Heart right ventricle (tissue), 16 donors: ENCODE measurements at regions of chr4 and their contacts with region 1.

Region 1: DNA sequence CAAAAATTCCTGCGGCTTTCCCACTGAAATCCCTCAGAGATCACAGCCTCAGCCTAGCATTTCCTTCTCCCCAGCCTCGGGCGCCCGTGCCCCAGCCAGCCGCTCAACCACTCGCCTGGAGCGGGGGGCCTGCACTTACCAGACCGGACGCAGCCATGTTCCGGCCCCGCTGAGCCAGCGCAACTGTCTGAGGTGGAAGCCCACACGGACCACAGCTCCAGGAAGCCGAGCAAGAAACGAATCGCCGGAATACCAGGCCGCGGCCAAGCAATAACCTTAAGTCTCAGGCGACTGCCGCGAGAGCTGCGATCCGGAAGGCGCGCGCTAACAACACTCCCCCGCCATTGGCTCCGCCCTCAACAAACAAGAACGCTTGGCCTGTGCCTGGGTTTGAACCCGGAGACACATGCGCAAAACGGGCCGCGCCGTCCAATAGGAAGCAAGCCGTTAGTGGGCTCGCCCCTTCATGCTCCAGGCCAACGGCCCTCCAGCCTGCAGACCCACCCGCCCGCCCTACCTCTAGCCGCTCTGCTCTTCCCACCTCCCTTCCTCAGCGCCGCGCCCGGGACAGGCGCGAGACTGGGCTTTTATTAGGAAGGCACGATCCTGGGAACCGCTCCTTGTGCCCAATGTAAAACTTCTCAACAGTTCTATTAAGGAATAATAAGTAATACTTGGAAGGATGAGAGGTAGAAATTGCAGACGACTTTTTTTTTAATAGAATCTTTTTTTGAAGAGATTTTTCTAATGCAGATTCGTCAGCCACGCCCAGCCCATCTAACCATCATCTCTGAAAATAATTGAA is at the start of gene CENPC:
- DNase-seq: peak; percentile 96 to 97
- ATAC-seq: peak; percentile 99 to 100 (median 100)
- H3K4me3 ChIP-seq: peak within 1 kb of the TSS; percentile 48 to 92 (median 79)
- H3K27ac ChIP-seq: peak within 1 kb of the TSS; percentile 28 to 98 (median 90)
- H3K4me1 ChIP-seq: peaks cover 0 to 39% (median 25%) of the 10 kb centered on the region in 9 donors
- H3K27me3 ChIP-seq: no peaks in the 10 kb centered on the region
- CTCF ChIP-seq: no peak
- total RNA-seq, gene CENPC: 7.0 to 12.9 (median 11.5) TPM

Region 2: DNA sequence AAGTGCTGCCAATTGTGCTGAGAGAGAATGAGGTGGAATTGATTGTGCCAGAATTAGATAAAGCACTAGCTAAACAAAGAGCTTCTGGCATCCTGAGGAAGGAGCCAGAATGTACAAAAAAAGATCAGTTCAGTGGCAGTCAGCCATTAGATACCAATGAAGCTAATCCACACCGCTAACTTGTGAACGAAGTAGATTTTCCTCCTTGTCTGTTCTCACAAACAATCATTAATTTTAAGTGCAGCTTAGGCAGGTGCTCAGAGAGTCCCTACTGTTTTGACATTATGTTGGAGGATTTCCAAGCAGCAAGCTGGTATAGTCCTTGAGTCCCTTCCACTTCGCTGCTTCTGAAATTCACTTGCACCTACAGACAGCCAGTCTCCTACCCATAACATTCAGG is 617.5 kb before region 1 on chr4:
- intact Hi-C with region 1: no loop called
- DNase-seq: no peak
- ATAC-seq: peak in 3 of 8 donors; percentile 25 to 77 (median 73)
- H3K4me3 ChIP-seq: no peak overlapping the region
- H3K27ac ChIP-seq: no peak overlapping the region
- H3K4me1 ChIP-seq: peaks cover 0 to 4% (median 0%) of the 10 kb centered on the region in 9 donors
- H3K27me3 ChIP-seq: no peaks in the 10 kb centered on the region
- CTCF ChIP-seq: no peak

Region 3: DNA sequence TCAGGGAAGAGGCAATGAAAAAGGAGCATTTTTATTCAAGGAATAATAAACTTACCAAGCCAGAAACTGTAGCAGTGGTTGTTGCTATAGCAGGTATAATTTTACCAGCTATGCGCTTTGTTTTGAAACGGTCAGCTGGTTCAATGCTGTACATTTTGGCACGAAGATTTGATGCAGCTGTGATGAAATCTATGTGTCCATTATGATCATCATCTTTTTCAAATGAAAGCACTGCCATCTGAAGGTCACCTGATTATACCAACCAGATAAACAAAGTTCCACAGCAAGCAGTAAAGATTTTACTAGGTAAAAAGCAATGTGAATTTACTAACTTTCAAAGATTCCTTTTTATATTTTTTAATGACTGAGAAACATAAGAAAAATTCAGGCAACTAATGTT is 79.5 kb after region 1 on chr4:
- intact Hi-C with region 1: loop called in 1 of 10 experiments (anchors 10 kb)
- DNase-seq: no peak
- ATAC-seq: no peak
- H3K4me3 ChIP-seq: no peak overlapping the region
- H3K27ac ChIP-seq: no peak overlapping the region
- H3K4me1 ChIP-seq: no peaks in the 10 kb centered on the region
- H3K27me3 ChIP-seq: no peaks in the 10 kb centered on the region
- CTCF ChIP-seq: no peak

Region 4: DNA sequence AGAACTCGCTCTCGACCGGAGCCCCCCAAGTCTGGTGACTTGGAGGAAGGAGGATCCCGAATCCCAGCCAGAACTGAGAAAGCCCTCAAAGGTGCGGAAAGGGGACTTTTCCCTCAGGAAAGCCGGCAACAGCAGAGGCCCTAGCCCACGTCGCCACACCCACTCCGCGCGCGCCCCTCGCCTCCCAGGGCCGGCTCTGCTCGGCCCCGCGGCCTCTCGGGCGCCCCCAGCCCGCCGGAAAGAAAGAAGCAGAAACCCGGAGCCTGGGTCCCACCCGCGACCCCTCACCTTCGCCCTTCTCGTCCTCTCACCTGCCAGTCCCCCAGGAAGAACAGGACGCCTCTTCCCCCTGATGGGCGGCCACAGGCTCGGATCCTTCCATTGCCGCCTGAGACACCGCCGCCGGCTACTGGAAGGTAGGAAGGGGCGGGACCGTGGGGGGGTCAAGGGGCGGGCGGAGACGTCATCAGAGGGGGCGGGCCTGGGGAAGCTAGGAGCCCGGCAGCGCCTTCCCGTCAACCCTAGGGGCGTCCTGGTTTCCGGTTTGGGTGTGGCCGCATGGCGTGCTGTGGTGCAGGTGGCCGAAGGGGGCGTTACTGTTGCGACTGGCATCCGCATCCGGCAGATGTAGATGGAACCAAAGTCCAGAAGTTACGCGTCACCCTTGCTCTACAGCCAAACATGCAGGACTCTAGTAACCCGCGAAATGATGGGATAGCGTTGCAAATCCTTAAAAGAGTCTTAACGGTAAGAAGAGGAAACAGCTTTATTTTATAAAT is 155.5 kb after region 1 on chr4 and contains the start of gene UBA6:
- intact Hi-C with region 1: loop called in 4 of 10 experiments (anchors 2 to 5 kb)
- DNase-seq: peak; percentile 95 to 96
- ATAC-seq: peak; percentile 100
- H3K4me3 ChIP-seq: peak within 1 kb of the TSS; percentile 63 to 94 (median 82)
- H3K27ac ChIP-seq: peak within 1 kb of the TSS; percentile 52 to 93 (median 84)
- H3K4me1 ChIP-seq: peaks cover 0 to 24% (median 20%) of the 10 kb centered on the region in 9 donors
- H3K27me3 ChIP-seq: no peaks in the 10 kb centered on the region
- CTCF ChIP-seq: peak; percentile 23 to 69 (median 55)
- total RNA-seq, gene UBA6: 12.9 to 35.7 (median 19.5) TPM

Region 5: GRCh38 chr4:68349649-68350360 is 804.4 kb after region 1 on chr4 and contains the start of gene YTHDC1:
- intact Hi-C with region 1: loop called in 1 of 10 experiments (anchors 10 kb)
- DNase-seq: peak; percentile 96 to 98
- ATAC-seq: peak; percentile 99 to 100 (median 99)
- H3K4me3 ChIP-seq: peak within 1 kb of the TSS; percentile 61 to 94 (median 88)
- H3K27ac ChIP-seq: peak within 1 kb of the TSS; percentile 90 to 100 (median 96)
- H3K4me1 ChIP-seq: peaks cover 5 to 47% (median 38%) of the 10 kb centered on the region in 9 donors
- H3K27me3 ChIP-seq: peaks cover 0 to 7% (median 0%) of the 10 kb centered on the region in 7 donors
- CTCF ChIP-seq: peak in 1 of 9 donors; percentile 10
- total RNA-seq, gene YTHDC1: 42.4 to 65.0 (median 52.4) TPM